Sciatic nerve (tissue), 2 donors: ENCODE measurements at regions of chr14 and their contacts with region 1.

Region 1: GRCh38 chr14:96380735-96381134 is 11.2 kb upstream of the AK7 start:
- DNase-seq: no peak
- ATAC-seq: no peak

Region 2: GRCh38 chr14:94681300-94682060 is 1699.3 kb before region 1 on chr14:
- intact Hi-C with region 1: no loop called
- DNase-seq: peak; percentile 59
- ATAC-seq: peak; percentile 69

Region 3: DNA sequence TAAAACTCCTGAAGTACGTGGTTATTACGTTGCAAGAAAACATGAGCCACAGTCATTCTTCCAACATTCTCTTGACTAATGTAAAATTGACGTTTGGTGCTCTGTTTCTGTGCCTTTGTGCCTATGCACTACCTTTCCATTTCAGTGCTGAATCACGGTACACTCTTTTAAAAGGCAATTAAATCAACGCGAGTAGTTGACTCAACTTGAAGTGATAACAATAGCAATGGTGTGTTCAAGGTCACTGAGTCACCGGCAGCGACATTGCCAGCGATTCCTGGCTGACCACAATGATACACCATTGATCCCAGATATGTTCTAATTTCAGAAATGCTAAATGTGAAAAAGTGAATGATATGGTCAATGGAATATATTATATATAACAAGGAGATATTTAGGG is 29.0 kb after region 1 on chr14:
- intact Hi-C with region 1: loop called (anchors 2 kb)
- DNase-seq: no peak
- ATAC-seq: no peak